MCF 10A (cell line): ENCODE measurements at regions of chr1 and their contacts with region 1.

Region 1: DNA sequence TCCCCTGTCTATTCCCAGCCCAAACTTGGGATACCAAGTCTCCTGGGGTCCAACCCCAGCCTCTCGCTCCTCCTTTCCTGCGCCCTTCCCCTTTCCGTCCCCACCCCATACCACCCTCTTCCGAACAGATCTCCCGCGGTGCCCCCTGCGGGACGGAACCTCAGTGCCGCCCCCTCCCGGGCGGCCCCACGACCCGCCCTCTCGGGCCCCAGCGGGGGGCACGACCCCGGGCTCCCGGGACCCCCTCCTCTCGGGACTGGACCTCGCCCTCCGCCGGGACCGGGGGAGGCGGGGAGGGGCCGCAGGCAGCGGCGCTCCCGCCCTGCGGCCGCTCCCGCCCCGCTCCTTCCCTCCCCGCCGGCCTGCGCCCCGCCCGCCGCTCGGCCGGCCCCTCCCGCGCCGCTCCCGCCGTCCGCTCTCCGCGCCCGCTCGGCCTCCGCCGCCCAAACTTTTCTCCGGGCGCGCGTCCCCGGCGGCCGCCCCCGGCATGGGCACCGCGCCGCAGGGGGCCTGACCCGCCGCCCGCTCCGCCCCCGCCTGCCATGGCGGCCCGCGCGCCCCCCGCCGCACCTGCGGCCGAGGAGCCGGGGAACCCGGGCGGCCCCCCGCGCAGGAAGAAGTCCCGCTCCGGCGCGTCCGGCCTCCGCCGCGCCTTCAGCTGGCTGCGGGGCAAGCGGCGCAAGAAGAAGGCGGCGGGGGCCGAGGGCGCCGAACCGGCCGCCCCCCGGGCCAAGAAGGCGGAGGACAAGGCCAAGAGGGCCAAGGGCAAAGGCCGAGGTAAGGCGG is 39.0 kb upstream of the SYNC start:
- DNase-seq: no peak
- H3K4me3 Mint-ChIP-seq: peak overlapping the region; percentile 75
- H3K27ac Mint-ChIP-seq: peak overlapping the region; percentile 63
- H3K4me1 Mint-ChIP-seq: peaks cover 27% of the 10 kb centered on the region
- H3K27me3 Mint-ChIP-seq: no peaks in the 10 kb centered on the region
- CTCF ChIP-seq: peak; percentile 59

Region 2: GRCh38 chr1:32753532-32754312 is 12.1 kb after region 1 on chr1:
- CTCF ChIA-PET with region 1: interaction called, 9 read pairs
- POLR2A ChIA-PET with region 1: interaction called, 53 read pairs
- intact Hi-C with region 1: no loop called
- DNase-seq: peak; percentile 74
- H3K4me3 Mint-ChIP-seq: peak overlapping the region; percentile 96
- H3K27ac Mint-ChIP-seq: no peak overlapping the region
- H3K4me1 Mint-ChIP-seq: peaks cover 16% of the 10 kb centered on the region
- H3K27me3 Mint-ChIP-seq: no peaks in the 10 kb centered on the region
- CTCF ChIP-seq: no peak